ENCODE measurements at regions of chr1 and their contacts with region 1.

Region 1: GRCh38 chr1:151327223-151327902 is at the start of gene PI4KB:
- DNase-seq: peak; percentile 85 to 90
- ATAC-seq: peak; percentile 97 to 98 (median 98)
- H3K4me3 ChIP-seq: peak within 1 kb of the TSS; percentile 92
- H3K27ac ChIP-seq: peak within 1 kb of the TSS; percentile 96
- H3K4me1 ChIP-seq: peaks cover 25% of the 10 kb centered on the region
- H3K27me3 ChIP-seq: no peaks in the 10 kb centered on the region
- CTCF ChIP-seq: no peak
- total RNA-seq, gene PI4KB: 51.9 to 96.4 (median 78.8) TPM

Region 2: DNA sequence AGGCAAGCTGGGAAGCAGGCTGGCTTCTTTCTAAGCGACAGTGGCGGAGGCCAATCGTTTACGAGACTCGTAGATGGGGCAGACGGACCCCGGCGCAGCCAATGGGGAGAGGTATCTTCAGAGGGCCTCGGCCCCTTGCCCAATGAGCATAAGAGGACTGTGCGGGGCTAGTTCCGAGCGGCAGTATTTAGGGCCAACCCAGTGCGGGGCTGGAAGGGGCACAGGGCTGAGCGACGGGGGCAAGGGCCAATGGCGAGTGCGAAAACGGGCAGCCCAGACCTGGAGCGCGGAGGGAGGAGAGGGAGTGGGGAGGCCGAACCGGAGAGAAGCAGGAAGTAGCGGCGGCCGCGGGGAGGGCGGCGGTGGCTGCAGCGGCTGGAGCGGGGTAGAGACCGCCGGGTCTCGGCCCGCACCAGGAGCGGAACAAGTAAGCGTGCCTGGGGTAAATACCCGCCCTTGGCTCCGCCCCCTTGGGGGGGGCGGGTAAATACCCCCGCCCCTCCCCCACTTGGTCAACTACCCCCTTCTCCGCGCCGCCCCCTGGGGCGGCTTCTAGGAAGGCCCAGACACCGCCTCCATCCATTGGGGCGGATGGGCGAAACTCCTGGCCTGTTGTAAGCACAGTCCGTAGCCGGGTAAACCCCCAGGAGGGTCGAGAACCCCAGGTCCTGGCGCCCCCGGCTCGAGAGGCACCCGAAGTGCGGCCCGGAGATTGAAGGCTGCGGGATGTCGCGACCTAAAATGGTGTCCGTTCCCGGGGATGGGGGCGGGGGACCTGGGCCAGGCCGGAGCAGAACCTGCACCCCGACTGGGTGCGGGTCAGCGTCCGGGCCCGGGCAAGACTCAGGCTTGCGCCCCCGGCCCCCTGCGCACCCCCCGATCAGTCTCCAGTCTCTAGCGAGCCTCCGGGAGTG is 45.1 kb before region 1 on chr1 and contains the start of gene ZNF687:
- intact Hi-C with region 1: loop called in 1 of 2 experiments (anchors 5 kb)
- DNase-seq: peak; percentile 100
- ATAC-seq: peak; percentile 87 to 92 (median 88)
- H3K4me3 ChIP-seq: peak within 1 kb of the TSS; percentile 85
- H3K27ac ChIP-seq: peak within 1 kb of the TSS; percentile 97
- H3K4me1 ChIP-seq: peaks cover 21% of the 10 kb centered on the region
- H3K27me3 ChIP-seq: no peaks in the 10 kb centered on the region
- CTCF ChIP-seq: no peak
- total RNA-seq, gene ZNF687: 10.6 to 14.8 (median 13.1) TPM

Region 3: DNA sequence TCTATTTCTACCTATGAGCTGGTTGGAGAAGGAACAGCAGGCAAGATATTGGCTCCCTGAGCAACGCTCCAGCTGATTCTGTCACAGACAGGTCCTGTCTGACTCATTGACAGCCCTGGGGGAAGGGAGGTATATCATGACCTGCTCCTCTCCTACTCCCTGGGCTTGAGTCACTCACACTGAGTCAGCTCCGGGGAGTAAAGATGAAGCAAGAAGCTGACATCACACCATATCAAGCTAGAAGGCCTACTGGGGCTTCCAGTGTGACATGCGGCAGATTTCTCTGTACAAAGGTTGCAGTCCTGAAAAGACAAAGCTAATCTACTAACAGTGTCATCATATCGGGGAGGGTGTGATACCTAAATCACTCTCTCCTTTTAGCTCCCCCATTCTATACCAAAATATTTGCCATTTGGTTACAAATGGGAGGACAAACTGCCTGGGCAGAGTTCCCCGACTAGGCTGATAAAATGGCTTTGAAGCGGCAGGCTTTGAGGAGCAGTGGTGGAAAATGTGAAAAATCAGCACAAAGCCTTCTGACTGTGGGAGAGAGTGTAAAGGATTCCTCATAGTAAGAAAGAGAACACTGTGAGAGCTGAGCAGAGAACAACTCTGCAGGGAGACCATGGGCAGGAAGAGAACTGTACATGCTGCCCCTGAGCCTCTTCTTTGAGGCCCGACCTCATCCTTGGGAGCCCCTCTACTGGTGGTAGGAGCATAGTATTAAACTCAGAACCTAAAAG is 15.6 kb before region 1 on chr1:
- intact Hi-C with region 1: loop called (anchors 1 to 2 kb)
- DNase-seq: peak; percentile 84 to 89
- ATAC-seq: peak; percentile 93 to 97 (median 96)
- H3K4me3 ChIP-seq: peak overlapping the region; percentile 27
- H3K27ac ChIP-seq: peak overlapping the region; percentile 97
- H3K4me1 ChIP-seq: peaks cover 57% of the 10 kb centered on the region
- H3K27me3 ChIP-seq: no peaks in the 10 kb centered on the region
- CTCF ChIP-seq: no peak

Region 4: DNA sequence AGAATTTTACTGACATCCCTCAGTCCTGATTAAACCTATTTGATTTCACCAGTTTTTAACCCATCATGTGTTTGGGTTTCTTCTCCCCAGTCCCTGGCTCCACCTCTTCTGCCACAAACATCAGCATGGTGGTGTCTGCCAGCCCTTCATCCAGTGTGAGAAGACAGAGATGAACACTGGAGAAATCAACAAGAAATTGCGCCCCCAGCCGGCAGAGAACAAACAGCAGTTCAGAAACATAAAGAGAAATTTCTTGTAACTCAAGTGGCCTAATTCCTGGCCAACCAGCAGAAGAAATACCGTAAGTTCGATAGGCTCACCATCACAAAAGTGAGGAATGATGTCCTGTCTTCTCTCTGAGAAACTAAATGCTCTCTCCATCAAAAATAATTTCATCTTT is 691.2 kb after region 1 on chr1:
- intact Hi-C with region 1: no loop called
- DNase-seq: no peak
- ATAC-seq: no peak
- H3K4me3 ChIP-seq: no peak overlapping the region
- H3K27ac ChIP-seq: no peak overlapping the region
- H3K4me1 ChIP-seq: no peaks in the 10 kb centered on the region
- H3K27me3 ChIP-seq: peaks cover 0 to 6% (median 0%) of the 10 kb centered on the region in 3 donors
- CTCF ChIP-seq: no peak

Measured in psoas muscle (tissue), 8 donors.